Left cardiac atrium (tissue), 4 donors: ENCODE measurements at regions of chr12 and their contacts with region 1.

Region 1: GRCh38 chr12:1804545-1805332 is 15.6 kb upstream of the LRTM2 start:
- DNase-seq: peak; percentile 92
- ATAC-seq: peak; percentile 86 to 91

Region 2: GRCh38 chr12:1916371-1917171 is 111.8 kb after region 1 on chr12:
- intact Hi-C with region 1: loop called in 1 of 2 experiments (anchors 5 kb)
- DNase-seq: peak; percentile 69
- ATAC-seq: peak; percentile 73 to 91

Region 3: DNA sequence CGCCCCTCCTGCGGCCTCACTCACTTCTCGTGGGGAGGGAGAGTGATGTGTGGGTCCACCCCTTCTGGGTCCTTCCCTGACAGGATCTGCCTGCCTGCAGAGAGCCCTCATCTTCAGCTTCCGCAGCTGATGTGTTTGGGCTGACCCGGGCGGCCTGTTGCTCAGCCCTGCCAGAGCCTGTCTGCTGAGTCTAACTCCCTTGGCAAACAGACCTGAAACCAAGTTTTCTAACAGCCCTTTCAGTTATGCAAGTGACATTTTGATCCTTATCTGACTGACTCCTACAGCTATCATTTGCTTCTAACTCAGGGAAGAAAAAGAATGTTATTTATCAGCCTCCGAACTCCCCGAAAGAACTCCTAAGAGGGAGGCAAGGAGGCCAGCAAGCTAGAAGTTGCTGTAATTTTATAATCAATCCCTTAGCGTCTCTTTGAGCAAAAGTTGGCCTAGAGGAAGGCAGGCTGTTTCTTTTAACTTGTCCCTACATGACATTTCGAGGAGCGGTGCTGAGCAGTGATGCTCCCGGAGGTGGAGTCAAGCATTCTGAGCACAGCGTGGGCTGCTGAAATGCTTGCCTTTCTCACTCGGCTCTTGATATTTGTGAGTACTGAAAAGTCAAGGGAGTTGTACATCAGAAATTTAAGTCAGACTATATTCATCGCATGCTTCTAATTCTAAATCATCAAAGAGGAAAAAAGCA is 145.2 kb after region 1 on chr12:
- intact Hi-C with region 1: no loop called
- DNase-seq: no peak
- ATAC-seq: peak; percentile 58 to 81